Activated T-helper 1 cell treated with anti-CD3 and anti-CD28 coated beads, Interleukin-12 subunit alpha, Interleukin-12 subunit beta, Interleukin-2, Interleukin-4 antibody, amounts not matched to agents 30 ng/mL and 10 ng/mL and 1 ng/mL, durations not matched to agents 14 hours and 24 hours and 36 hours (primary cell): ENCODE measurements at regions of chr2 and their contacts with region 1.

Region 1: GRCh38 chr2:230987137-230988020 is 8.5 kb upstream of the SPATA3 start:
- DNase-seq: peak; percentile 68
- H3K4me3 Mint-ChIP-seq: peak overlapping the region; percentile 26
- H3K27ac Mint-ChIP-seq: no peak overlapping the region
- H3K4me1 Mint-ChIP-seq: peaks cover 35% of the 10 kb centered on the region
- H3K27me3 Mint-ChIP-seq: peaks cover 39% of the 10 kb centered on the region

Region 2: DNA sequence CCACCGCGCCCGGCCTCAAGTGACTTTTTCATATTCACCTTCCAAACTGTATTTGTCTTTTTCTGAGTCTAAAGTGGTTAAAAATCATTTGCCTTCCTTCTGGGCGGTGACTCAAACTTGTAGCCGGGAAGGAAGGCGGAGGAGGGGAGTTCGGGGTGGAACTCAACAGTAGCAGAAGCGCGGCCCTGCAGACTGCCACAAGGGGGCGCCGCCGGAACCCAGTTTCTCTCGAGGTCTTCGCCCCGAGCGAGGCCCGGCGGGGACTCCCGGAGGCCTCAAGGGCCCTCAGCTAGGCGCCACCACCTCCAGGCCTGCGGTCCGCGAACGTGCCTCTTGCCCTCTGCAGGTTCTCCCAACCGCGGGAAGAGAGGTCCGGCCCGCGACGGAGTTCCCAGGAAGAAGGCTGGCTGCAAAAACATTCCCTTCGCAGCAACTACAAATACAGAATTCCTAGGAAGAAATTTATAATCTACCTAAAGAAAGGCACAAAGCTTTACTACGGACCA is 139.4 kb before region 1 on chr2:
- intact Hi-C with region 1: loop called (anchors 1 kb)
- DNase-seq: peak; percentile 75
- H3K4me3 Mint-ChIP-seq: no peak overlapping the region
- H3K27ac Mint-ChIP-seq: no peak overlapping the region
- H3K4me1 Mint-ChIP-seq: peaks cover 22% of the 10 kb centered on the region
- H3K27me3 Mint-ChIP-seq: peaks cover 60% of the 10 kb centered on the region

Region 3: GRCh38 chr2:230902180-230902899 is 85.0 kb before region 1 on chr2:
- intact Hi-C with region 1: loop called (anchors 1 kb)
- DNase-seq: no peak
- H3K4me3 Mint-ChIP-seq: no peak overlapping the region
- H3K27ac Mint-ChIP-seq: no peak overlapping the region
- H3K4me1 Mint-ChIP-seq: peaks cover 17% of the 10 kb centered on the region
- H3K27me3 Mint-ChIP-seq: peaks cover 64% of the 10 kb centered on the region

Region 4: GRCh38 chr2:230924470-230925341 is 62.7 kb before region 1 on chr2 and contains the start of gene GPR55:
- intact Hi-C with region 1: loop called (anchors 1 kb)
- DNase-seq: peak; percentile 24
- H3K4me3 Mint-ChIP-seq: peak within 1 kb of the TSS; percentile 62
- H3K27ac Mint-ChIP-seq: peak within 1 kb of the TSS; percentile 84
- H3K4me1 Mint-ChIP-seq: peaks cover 58% of the 10 kb centered on the region
- H3K27me3 Mint-ChIP-seq: peaks cover 37% of the 10 kb centered on the region
- total RNA-seq, gene GPR55: 0.13 and 0.29 TPM in 2 replicates

Region 5: GRCh38 chr2:230956827-230957755 is 30.3 kb before region 1 on chr2:
- intact Hi-C with region 1: loop called (anchors 1 kb)
- DNase-seq: no peak
- H3K4me3 Mint-ChIP-seq: peak overlapping the region; percentile 80
- H3K27ac Mint-ChIP-seq: peak overlapping the region; percentile 38
- H3K4me1 Mint-ChIP-seq: peaks cover 29% of the 10 kb centered on the region
- H3K27me3 Mint-ChIP-seq: peaks cover 81% of the 10 kb centered on the region

Region 6: GRCh38 chr2:231056453-231057424 is 69.4 kb after region 1 on chr2 and contains the start of gene PSMD1:
- intact Hi-C with region 1: loop called (anchors 5 kb)
- DNase-seq: peak; percentile 89
- H3K4me3 Mint-ChIP-seq: peak within 1 kb of the TSS; percentile 98
- H3K27ac Mint-ChIP-seq: peak within 1 kb of the TSS; percentile 100
- H3K4me1 Mint-ChIP-seq: peaks cover 52% of the 10 kb centered on the region
- H3K27me3 Mint-ChIP-seq: no peaks in the 10 kb centered on the region
- total RNA-seq, gene PSMD1: 172 and 181 TPM in 2 replicates